Activated T-helper 1 cell treated with anti-CD3 and anti-CD28 coated beads, Interleukin-12 subunit alpha, Interleukin-12 subunit beta, Interleukin-2, Interleukin-4 antibody, amounts not matched to agents 30 ng/mL and 10 ng/mL and 1 ng/mL, durations not matched to agents 14 hours and 24 hours and 36 hours (primary cell): ENCODE measurements at regions of chr12 and their contacts with region 1.

Region 1: DNA sequence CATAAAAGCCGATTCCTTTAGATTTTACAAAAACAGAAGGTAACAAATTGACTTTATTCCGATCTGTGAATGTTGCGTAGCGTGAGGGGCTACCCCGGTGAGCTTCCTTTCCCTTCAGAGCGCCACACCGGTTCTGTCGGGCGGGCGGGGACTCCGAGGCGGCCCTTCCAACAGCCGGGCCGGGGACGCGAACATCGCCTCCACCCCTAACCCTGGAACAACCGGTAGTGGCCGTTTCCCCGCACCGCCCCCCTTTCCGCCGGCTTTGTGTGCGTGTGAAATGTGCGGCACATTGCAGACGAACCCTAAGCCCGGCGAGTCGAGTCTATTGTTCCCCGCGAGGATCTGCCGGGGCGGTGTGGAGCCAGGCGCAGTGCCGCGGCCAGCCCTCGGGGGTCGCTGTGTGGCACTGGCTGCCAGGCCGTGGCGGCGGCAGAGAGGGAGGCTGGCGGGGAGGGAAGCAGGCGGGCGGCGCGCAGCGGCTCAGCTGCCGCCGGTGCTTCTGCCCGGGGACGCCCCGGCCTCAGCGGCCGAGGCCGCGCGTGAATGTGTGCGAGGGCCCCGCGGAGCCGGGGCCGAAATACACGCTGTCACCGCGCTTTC is 775 bp upstream of the ARID2 start:
- DNase-seq: peak; percentile 96
- H3K4me3 Mint-ChIP-seq: peak overlapping the region; percentile 99
- H3K27ac Mint-ChIP-seq: peak overlapping the region; percentile 100
- H3K4me1 Mint-ChIP-seq: peaks cover 40% of the 10 kb centered on the region
- H3K27me3 Mint-ChIP-seq: no peaks in the 10 kb centered on the region

Region 2: DNA sequence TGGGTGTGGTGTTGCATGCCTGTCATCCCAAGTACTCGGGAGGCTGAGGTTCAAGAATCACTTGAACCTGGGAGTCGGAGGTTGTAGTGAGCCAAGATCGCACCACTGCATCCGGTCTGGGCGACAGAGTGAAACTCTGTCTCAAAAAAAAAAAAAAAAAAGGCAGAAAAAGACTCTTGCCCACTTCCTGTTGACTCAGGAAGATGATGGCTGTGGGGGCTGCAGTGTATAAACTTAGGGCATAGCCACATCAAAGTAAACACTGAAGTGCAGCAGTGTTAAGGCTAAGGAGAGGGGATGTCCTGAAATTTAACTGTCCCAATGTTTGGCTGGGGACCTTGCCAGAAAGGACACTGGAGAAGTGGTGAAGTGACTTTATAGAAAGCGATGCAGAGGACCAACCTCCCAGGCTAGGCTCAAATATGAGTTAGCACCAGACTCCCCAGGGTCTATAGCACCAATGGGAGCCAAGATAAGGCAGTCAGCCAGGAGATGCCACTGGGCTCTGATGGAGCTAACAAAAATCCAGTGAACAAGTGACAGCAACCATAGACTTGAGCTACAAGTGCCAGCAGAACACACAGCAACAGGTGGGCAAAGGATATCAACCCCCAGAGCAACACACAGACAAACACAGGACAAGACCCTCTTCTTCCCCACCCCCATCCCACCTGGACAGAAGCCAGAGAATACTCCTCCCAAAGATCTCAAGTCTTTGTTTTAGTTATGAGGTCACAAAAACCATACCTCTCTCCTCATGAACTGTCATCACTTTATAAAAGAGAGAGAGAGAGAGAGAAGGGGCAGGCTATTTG is 880.6 kb before region 1 on chr12:
- intact Hi-C with region 1: loop called (anchors 5 kb)
- DNase-seq: peak; percentile 65
- H3K4me3 Mint-ChIP-seq: peak overlapping the region; percentile 63
- H3K27ac Mint-ChIP-seq: peak overlapping the region; percentile 94
- H3K4me1 Mint-ChIP-seq: peaks cover 80% of the 10 kb centered on the region
- H3K27me3 Mint-ChIP-seq: no peaks in the 10 kb centered on the region

Region 3: GRCh38 chr12:45215419-45216229 is 513.1 kb before region 1 on chr12 and contains the start of gene ANO6:
- intact Hi-C with region 1: loop called (anchors 1 kb)
- DNase-seq: peak; percentile 78
- H3K4me3 Mint-ChIP-seq: peak within 1 kb of the TSS; percentile 92
- H3K27ac Mint-ChIP-seq: peak within 1 kb of the TSS; percentile 95
- H3K4me1 Mint-ChIP-seq: peaks cover 43% of the 10 kb centered on the region
- H3K27me3 Mint-ChIP-seq: peaks cover 1% of the 10 kb centered on the region
- total RNA-seq, gene ANO6: 21.7 and 22.1 TPM in 2 replicates

Region 4: DNA sequence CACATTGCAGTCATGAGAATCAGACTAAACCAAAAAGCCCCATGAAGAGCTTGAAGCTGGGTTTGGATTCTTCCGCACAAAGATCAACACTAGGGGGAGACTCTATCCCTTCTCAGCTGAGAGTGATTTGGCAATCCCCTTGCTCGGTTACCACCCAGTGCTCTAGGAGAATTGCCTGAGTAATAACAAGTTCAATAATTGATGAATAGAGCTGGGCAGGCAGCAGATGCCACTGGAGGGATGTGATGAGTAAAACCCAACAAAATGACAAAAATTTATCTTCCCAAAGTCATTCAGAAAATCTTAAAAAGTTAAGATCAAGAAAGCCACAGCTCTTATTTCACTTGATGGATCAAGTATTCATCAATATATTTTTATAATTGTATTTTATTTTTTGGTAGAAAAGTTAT is 184.8 kb before region 1 on chr12:
- intact Hi-C with region 1: loop called (anchors 1 kb)
- DNase-seq: peak; percentile 45
- H3K4me3 Mint-ChIP-seq: no peak overlapping the region
- H3K27ac Mint-ChIP-seq: no peak overlapping the region
- H3K4me1 Mint-ChIP-seq: no peaks in the 10 kb centered on the region
- H3K27me3 Mint-ChIP-seq: peaks cover 4% of the 10 kb centered on the region

Region 5: DNA sequence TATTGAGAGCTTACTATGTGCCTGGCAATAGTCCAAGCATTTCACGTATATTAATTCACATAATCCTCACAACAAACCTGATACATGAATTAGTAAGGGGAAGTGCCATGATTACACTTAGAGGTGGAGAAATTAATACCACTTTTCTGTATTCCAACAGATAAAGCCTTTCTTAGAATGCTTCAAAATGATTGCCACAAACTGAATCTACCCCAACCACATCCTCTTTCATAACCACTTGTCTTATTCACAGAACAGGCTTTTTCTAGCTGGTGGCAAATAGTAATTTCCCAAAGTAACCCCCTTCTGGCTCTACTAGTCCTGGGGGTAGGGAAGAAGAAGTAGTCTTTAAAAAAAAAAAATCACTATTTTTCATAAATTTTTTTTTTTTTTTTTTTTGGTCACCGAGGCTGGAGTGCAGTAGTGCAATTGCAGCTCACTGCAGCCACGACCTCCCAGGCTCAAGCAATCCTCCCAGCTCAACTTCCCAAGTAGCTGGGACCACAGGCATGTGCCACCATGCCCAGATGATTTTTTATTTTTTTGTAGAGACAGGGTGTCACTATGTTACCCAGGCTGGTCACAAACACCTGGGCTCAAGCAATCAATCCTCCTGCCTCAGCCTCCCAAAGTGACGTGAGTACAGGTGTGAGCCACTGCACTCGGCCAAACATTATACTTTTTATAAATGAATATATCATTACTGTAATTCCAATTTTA is 58.2 kb before region 1 on chr12:
- intact Hi-C with region 1: loop called (anchors 1 kb)
- DNase-seq: peak; percentile 9
- H3K4me3 Mint-ChIP-seq: no peak overlapping the region
- H3K27ac Mint-ChIP-seq: no peak overlapping the region
- H3K4me1 Mint-ChIP-seq: peaks cover 31% of the 10 kb centered on the region
- H3K27me3 Mint-ChIP-seq: no peaks in the 10 kb centered on the region

Region 6: DNA sequence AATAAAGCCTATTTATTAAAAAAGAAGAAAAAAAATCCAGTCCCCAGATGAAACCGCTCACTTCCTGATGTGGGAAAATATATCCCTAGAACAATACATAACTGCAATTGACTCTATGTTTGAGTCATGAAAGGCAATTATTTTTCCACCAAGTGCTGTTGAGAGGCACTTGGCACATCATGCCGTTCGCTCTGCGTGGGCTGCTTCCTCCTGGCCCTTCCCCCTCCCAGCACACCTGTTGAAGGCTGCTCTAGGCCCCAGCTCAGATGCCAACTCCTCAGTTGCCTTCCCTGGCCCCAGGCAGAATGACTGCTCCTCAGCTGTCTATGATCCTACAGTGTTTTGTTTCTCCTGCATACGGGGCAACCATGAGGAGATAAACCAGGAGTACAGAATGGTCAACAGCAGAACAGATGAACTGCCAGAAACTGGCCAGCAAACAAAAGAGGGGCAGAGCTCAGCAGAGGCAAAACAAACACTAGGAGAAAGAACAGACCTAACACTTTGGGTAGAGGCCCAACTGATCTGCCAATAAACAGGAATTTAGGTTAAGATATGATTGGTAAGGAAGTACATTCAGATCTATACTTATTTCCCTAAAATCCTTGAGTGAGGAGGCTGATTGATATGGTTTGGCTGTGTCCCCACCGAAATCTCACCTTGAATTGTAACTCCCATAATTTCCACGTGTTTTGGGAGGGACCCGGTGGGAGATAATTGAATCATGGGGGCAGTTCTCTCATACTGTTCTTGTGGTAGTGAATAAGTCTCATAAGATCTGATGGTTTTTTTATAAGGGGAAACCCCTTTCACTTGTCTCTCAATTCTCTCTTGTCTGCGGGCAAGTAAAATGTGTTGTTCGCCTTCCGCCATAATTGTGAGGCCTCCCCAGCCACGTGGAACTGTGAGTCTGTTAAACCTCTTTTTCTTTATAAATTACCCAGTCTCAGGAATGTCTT is 481.5 kb after region 1 on chr12:
- intact Hi-C with region 1: loop called (anchors 5 kb)
- DNase-seq: peak; percentile 31
- H3K4me3 Mint-ChIP-seq: peak overlapping the region; percentile 52
- H3K27ac Mint-ChIP-seq: peak overlapping the region; percentile 96
- H3K4me1 Mint-ChIP-seq: peaks cover 64% of the 10 kb centered on the region
- H3K27me3 Mint-ChIP-seq: no peaks in the 10 kb centered on the region